Naive thymus-derived CD4-positive, alpha-beta T cell (primary cell): ENCODE measurements at regions of chr14 and their contacts with region 1.

Region 1: GRCh38 chr14:39426605-39427004 is 5.6 kb downstream of the FBXO33 start:
- DNase-seq: peak in 2 of 9 donors; percentile 22 to 25
- ATAC-seq: peak; percentile 34
- H3K4me3 ChIP-seq: no peak overlapping the region
- H3K4me3 Mint-ChIP-seq: peak overlapping the region; percentile 0 to 100 (median 58)
- H3K27ac ChIP-seq: no peak overlapping the region
- H3K27ac Mint-ChIP-seq: peak overlapping the region in 4 of 9 donors; percentile 9 to 76 (median 48)
- H3K4me1 ChIP-seq: peaks cover 31 to 52% of the 10 kb centered on the region in 2 donors
- H3K4me1 Mint-ChIP-seq: peaks cover 55 to 94% (median 84%) of the 10 kb centered on the region in 7 donors
- H3K27me3 ChIP-seq: no peaks in the 10 kb centered on the region
- H3K27me3 Mint-ChIP-seq: no peaks in the 10 kb centered on the region

Region 2: DNA sequence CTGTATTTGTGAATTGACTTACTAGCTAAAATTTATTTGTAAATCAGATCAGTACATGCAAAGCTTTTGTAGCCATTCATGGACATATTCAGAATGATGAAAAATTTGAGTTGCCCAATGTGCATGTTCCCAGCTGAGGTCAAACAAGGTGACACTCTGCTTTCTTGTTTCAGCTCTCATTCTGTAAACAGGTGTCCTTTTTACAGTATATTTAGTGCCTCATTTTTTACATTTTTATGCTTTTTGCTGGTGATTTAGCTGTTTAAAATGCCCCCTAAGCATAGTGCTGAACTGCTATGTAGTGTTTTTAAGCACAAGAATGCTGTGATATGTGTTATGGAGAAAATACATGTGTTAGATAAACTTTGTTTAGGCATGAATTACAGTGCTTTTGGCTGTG is 116.6 kb before region 1 on chr14:
- CTCF ChIA-PET with region 1: no interaction called
- POLR2A ChIA-PET with region 1: no interaction called
- intact Hi-C with region 1: loop called in 1 of 2 experiments (anchors 5 kb)
- DNase-seq: no peak
- ATAC-seq: no peak
- H3K4me3 ChIP-seq: no peak overlapping the region
- H3K4me3 Mint-ChIP-seq: no peak overlapping the region
- H3K27ac ChIP-seq: no peak overlapping the region
- H3K27ac Mint-ChIP-seq: no peak overlapping the region
- H3K4me1 ChIP-seq: no peaks in the 10 kb centered on the region
- H3K4me1 Mint-ChIP-seq: peaks cover 0 to 8% (median 2%) of the 10 kb centered on the region in 7 donors
- H3K27me3 ChIP-seq: no peaks in the 10 kb centered on the region
- H3K27me3 Mint-ChIP-seq: no peaks in the 10 kb centered on the region

Region 3: DNA sequence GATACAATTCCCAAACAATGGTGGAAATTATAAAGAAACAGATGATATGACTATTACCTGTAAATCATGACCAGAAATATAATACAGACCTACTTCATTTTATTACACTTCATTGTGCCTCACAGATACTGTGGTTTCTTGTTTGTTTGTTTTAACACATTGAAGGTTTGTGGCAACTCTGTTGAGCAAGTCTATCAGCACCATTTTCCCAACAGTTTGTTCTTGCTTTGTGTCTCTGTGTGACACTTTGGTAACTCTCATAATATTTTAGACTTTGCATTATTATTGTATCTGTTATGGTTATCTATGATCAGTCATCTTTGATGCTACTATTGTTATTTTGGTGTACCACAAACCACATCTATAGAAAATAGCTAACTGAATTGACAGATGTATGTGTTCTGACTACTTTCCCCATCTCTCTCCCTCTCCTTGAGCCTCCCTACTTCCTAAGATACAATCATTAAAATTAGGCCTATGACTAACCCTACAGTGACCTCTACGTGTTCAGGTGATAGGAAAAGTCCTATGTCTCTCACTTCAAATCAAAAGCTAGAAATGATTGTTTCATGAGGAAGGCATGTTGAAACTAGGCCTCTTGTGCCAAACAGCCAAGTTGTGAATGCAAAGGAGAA is 43.5 kb before region 1 on chr14:
- CTCF ChIA-PET with region 1: no interaction called
- POLR2A ChIA-PET with region 1: no interaction called
- intact Hi-C with region 1: no loop called
- DNase-seq: peak in 2 of 9 donors; percentile 12 to 21
- ATAC-seq: peak; percentile 54
- H3K4me3 ChIP-seq: no peak overlapping the region
- H3K4me3 Mint-ChIP-seq: peak overlapping the region in 3 of 10 donors; percentile 29 to 48 (median 31)
- H3K27ac ChIP-seq: no peak overlapping the region
- H3K27ac Mint-ChIP-seq: peak overlapping the region in 7 of 9 donors; percentile 0 to 84 (median 20)
- H3K4me1 ChIP-seq: peaks cover 4 to 25% of the 10 kb centered on the region in 2 donors
- H3K4me1 Mint-ChIP-seq: peaks cover 15 to 47% (median 36%) of the 10 kb centered on the region in 7 donors
- H3K27me3 ChIP-seq: no peaks in the 10 kb centered on the region
- H3K27me3 Mint-ChIP-seq: no peaks in the 10 kb centered on the region

Region 4: DNA sequence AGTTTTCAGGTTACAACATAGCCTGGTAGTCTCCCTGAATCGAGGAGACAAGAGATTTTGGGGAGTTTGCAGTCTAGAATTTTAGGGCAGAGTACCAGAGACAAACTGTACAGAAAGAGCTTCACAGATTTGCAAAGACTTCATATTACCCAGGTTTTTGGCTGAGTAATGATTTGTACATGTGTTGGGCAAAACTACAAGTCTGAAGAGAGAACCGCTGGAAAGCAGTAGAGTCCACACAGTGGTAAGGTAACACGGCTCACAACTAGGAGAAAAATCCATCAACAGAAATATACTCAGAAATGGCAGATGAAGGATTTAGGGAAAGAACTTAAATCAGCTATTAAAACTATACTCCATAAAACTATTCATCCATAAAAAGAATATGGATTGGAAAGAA is 20.0 kb before region 1 on chr14:
- CTCF ChIA-PET with region 1: no interaction called
- POLR2A ChIA-PET with region 1: no interaction called
- intact Hi-C with region 1: loop called in 1 of 2 experiments (anchors 2 kb)
- DNase-seq: no peak
- ATAC-seq: no peak
- H3K4me3 ChIP-seq: no peak overlapping the region
- H3K4me3 Mint-ChIP-seq: peak overlapping the region in 3 of 10 donors; percentile 3 to 16 (median 12)
- H3K27ac ChIP-seq: no peak overlapping the region
- H3K27ac Mint-ChIP-seq: peak overlapping the region in 5 of 9 donors; percentile 0 to 81 (median 25)
- H3K4me1 ChIP-seq: no peaks in the 10 kb centered on the region
- H3K4me1 Mint-ChIP-seq: peaks cover 2 to 58% (median 49%) of the 10 kb centered on the region in 7 donors
- H3K27me3 ChIP-seq: no peaks in the 10 kb centered on the region
- H3K27me3 Mint-ChIP-seq: no peaks in the 10 kb centered on the region

Region 5: DNA sequence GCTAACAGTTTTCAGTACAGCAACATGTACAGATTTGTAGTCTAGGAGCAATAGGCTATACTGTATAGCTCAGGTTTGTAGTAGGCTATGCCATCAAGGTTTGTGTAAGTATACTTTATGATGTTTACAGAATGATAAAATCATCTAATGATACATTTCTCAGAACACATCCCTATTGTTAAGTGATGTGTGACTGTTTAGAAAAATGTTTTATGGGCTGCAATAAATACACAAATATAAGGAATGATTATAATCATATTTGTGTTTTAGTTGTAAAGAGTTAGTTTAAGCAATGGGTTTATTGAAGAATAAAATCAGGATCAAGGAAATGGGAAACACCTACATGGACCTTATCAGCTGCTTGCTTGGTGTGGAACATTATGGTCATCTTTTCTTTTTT is 30.1 kb after region 1 on chr14:
- CTCF ChIA-PET with region 1: no interaction called
- POLR2A ChIA-PET with region 1: no interaction called
- intact Hi-C with region 1: no loop called
- DNase-seq: no peak
- ATAC-seq: no peak
- H3K4me3 ChIP-seq: no peak overlapping the region
- H3K4me3 Mint-ChIP-seq: no peak overlapping the region
- H3K27ac ChIP-seq: no peak overlapping the region
- H3K27ac Mint-ChIP-seq: no peak overlapping the region
- H3K4me1 ChIP-seq: no peaks in the 10 kb centered on the region
- H3K4me1 Mint-ChIP-seq: peaks cover 0 to 7% (median 0%) of the 10 kb centered on the region in 7 donors
- H3K27me3 ChIP-seq: no peaks in the 10 kb centered on the region
- H3K27me3 Mint-ChIP-seq: peaks cover 0 to 5% (median 0%) of the 10 kb centered on the region in 5 donors

Region 6: DNA sequence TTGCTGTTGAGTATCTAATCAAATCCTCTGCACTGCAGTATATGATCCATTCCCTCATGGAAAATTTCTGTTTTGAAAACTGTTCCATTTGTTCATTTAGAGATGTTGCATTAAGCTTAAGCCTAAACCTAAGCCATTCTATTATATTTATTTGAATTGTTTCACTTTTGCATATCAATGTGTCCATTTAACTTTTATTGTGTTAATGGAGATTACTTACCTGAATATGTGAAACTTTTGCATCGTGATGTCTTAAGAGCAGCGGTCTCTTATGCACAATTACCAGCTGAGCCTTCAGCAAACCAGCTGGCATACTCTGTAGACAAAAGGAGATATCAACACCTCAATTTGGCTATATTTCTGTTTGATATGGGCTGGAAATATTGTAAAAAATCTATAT is 928.1 kb after region 1 on chr14:
- CTCF ChIA-PET with region 1: no interaction called
- POLR2A ChIA-PET with region 1: no interaction called
- intact Hi-C with region 1: no loop called
- DNase-seq: no peak
- ATAC-seq: no peak
- H3K4me3 ChIP-seq: no peak overlapping the region
- H3K4me3 Mint-ChIP-seq: no peak overlapping the region
- H3K27ac ChIP-seq: no peak overlapping the region
- H3K27ac Mint-ChIP-seq: no peak overlapping the region
- H3K4me1 ChIP-seq: no peaks in the 10 kb centered on the region
- H3K4me1 Mint-ChIP-seq: no peaks in the 10 kb centered on the region
- H3K27me3 ChIP-seq: no peaks in the 10 kb centered on the region
- H3K27me3 Mint-ChIP-seq: no peaks in the 10 kb centered on the region